Endothelial cell of umbilical vein (primary cell): ENCODE measurements at regions of chr5 and their contacts with region 1.

Region 1: GRCh38 chr5:82622711-82623514 is 344.8 kb upstream of the RPS23 start:
- DNase-seq: no peak
- H3K4me3 ChIP-seq: no peak overlapping the region
- H3K27ac ChIP-seq: no peak overlapping the region
- H3K4me1 ChIP-seq: peaks cover 15% of the 10 kb centered on the region
- H3K27me3 ChIP-seq: no peaks in the 10 kb centered on the region
- CTCF ChIP-seq: no peak
- POLR2A ChIP-seq: no peak

Region 2: GRCh38 chr5:82662340-82662739 is 39.4 kb after region 1 on chr5:
- CTCF ChIA-PET with region 1: no interaction called
- POLR2A ChIA-PET with region 1: no interaction called
- dilution Hi-C with region 1: no loop called
- intact Hi-C with region 1: loop called (anchors 1 kb)
- DNase-seq: no peak
- H3K4me3 ChIP-seq: no peak overlapping the region
- H3K27ac ChIP-seq: no peak overlapping the region
- H3K4me1 ChIP-seq: no peaks in the 10 kb centered on the region
- H3K27me3 ChIP-seq: peaks cover 0 to 2% of the 10 kb centered on the region in 2 experiments
- CTCF ChIP-seq: no peak
- POLR2A ChIP-seq: no peak